SK-N-SH (cell line): ENCODE measurements at regions of chr2 and their contacts with region 1.

Region 1: DNA sequence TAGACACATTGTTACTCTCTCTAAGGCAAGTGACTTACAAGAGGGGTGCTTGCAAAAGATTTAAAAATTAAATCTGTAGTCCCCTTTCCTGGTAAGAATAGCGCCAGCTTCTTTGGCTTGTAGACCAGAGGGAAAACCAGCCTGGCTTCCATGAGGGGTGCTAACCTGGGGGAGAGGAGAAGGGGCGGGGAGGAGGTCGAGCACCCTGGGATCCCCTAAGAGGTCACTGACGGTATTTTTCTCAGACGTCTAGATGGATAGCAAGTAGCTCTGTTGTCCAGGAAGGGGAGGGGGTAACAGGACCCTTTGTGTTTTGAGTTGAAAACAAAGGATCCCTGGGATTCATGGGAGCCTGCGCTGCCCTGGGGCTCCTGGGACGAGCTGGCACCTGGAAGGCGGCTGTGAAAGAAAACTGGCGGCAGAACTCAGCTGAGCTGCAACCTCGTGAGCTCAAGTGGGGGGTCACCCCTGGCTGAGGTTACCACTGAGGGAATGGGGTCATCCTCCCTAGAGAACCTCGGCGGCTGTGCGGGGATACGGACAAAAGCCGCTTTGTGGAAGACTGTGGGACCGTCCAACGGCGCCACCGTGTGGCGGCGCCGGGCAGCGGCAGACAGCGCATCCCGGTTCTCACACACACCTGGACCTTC is 37.8 kb upstream of the MRPL19 start:
- DNase-seq: peak; percentile 80
- H3K4me3 ChIP-seq: peak overlapping the region; percentile 16 to 37; a peak in 3 of 4 replicates
- H3K27ac ChIP-seq: no peak overlapping the region
- H3K4me1 ChIP-seq: peaks cover 8 to 43% of the 10 kb centered on the region in 2 experiments
- H3K27me3 ChIP-seq: no peaks in the 10 kb centered on the region
- CTCF ChIP-seq: peak; percentile 99
- EP300 ChIP-seq: no peak
- RAD21 ChIP-seq: peak; percentile 88

Region 2: GRCh38 chr2:75480971-75481836 is 127.6 kb before region 1 on chr2:
- CTCF ChIA-PET with region 1: interaction called, 28 read pairs
- POLR2A ChIA-PET with region 1: no interaction called
- DNase-seq: peak; percentile 30
- H3K4me3 ChIP-seq: no peak overlapping the region
- H3K27ac ChIP-seq: no peak overlapping the region
- H3K4me1 ChIP-seq: peaks cover 2 to 7% of the 10 kb centered on the region in 2 experiments; a peak in 3 of 4 replicates
- H3K27me3 ChIP-seq: no peaks in the 10 kb centered on the region
- CTCF ChIP-seq: peak; percentile 37
- EP300 ChIP-seq: no peak
- RAD21 ChIP-seq: peak; percentile 34

Region 3: GRCh38 chr2:75513616-75514170 is 95.1 kb before region 1 on chr2:
- CTCF ChIA-PET with region 1: no interaction called
- POLR2A ChIA-PET with region 1: no interaction called
- DNase-seq: no peak
- H3K4me3 ChIP-seq: no peak overlapping the region
- H3K27ac ChIP-seq: no peak overlapping the region
- H3K4me1 ChIP-seq: no peaks in the 10 kb centered on the region; a peak in 1 of 4 replicates
- H3K27me3 ChIP-seq: no peaks in the 10 kb centered on the region
- CTCF ChIP-seq: no peak
- EP300 ChIP-seq: no peak
- RAD21 ChIP-seq: no peak

Region 4: DNA sequence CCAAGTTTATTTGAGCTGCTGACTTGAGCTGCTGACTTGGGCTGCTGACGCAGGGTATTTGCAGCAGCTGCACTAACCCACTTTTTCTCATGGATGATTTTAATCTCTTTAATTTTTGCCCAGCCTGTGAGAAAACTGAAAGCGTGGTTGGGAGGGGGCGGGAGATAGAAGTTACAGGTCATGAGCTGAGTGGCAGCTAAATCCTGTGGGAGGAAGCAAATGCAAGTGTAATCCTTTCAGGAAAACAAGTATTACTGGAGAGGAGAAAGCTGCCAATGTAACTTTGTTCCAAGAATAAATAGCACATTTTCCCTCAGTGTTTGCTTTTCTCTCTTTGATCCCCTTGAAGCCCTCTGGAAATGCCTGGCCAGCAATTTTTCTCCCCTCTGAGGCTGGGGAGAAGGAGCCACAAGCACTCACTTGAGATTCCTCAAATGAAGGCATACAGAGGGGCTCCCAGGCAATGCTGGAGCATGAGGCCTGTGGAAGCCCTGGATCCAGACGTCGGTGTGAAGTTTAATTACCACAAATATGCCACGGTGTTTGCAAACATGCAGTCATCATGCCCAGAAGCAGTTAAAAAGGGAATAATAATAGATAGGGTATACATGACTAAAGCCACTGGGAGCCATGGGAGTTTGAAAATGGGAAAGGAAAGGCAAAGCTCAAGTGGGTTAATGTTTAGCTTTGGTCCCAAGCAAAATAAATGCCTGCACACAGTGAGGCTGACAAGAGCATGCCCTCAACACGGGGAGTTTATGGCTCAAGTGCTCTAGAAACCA is 37.7 kb before region 1 on chr2:
- CTCF ChIA-PET with region 1: interaction called, 15 read pairs
- POLR2A ChIA-PET with region 1: no interaction called
- DNase-seq: no peak
- H3K4me3 ChIP-seq: no peak overlapping the region
- H3K27ac ChIP-seq: no peak overlapping the region
- H3K4me1 ChIP-seq: peaks cover 4 to 24% of the 10 kb centered on the region in 2 experiments; a peak in 3 of 4 replicates
- H3K27me3 ChIP-seq: no peaks in the 10 kb centered on the region
- CTCF ChIP-seq: no peak
- EP300 ChIP-seq: no peak
- RAD21 ChIP-seq: no peak

Region 5: GRCh38 chr2:75595551-75596395 is 13.0 kb before region 1 on chr2:
- CTCF ChIA-PET with region 1: interaction called, 17 read pairs
- POLR2A ChIA-PET with region 1: no interaction called
- DNase-seq: no peak
- H3K4me3 ChIP-seq: peak overlapping the region in 1 of 2 experiments; percentile 25; a peak in 1 of 4 replicates
- H3K27ac ChIP-seq: peak overlapping the region; percentile 81 to 97; a peak in 3 of 4 replicates
- H3K4me1 ChIP-seq: peaks cover 0 to 43% of the 10 kb centered on the region in 2 experiments
- H3K27me3 ChIP-seq: no peaks in the 10 kb centered on the region
- CTCF ChIP-seq: no peak
- EP300 ChIP-seq: peak in 1 of 2 experiments; percentile 86; a peak in 2 of 4 replicates
- RAD21 ChIP-seq: no peak

Region 6: GRCh38 chr2:75627895-75628504 is 19.2 kb after region 1 on chr2:
- CTCF ChIA-PET with region 1: interaction called, 29 read pairs
- POLR2A ChIA-PET with region 1: no interaction called
- DNase-seq: peak; percentile 64
- H3K4me3 ChIP-seq: peak overlapping the region in 1 of 2 experiments; percentile 53; a peak in 1 of 4 replicates
- H3K27ac ChIP-seq: no peak overlapping the region
- H3K4me1 ChIP-seq: peaks cover 5 to 8% of the 10 kb centered on the region in 2 experiments
- H3K27me3 ChIP-seq: no peaks in the 10 kb centered on the region
- CTCF ChIP-seq: peak; percentile 97
- EP300 ChIP-seq: no peak
- RAD21 ChIP-seq: peak; percentile 87

Region 7: DNA sequence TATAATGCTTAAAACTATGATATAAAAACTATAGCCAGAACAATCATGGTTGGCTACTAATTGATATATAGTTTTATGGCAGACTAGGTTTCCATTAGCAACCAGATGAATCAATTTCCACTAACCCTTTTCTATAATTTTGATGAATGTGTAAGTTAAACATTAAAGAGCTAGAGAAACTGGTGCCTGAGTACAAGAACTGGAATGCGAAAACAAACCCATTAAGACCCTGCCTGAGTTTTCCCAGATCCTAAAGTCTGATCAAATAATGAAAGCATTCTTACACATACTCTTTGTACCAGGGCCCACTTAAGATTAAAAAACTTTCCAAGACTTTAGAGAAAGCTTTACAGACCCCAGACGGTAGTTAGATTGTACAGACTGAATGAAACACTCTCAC is 59.1 kb after region 1 on chr2:
- CTCF ChIA-PET with region 1: no interaction called
- POLR2A ChIA-PET with region 1: no interaction called
- DNase-seq: no peak
- H3K4me3 ChIP-seq: no peak overlapping the region
- H3K27ac ChIP-seq: no peak overlapping the region
- H3K4me1 ChIP-seq: no peaks in the 10 kb centered on the region; a peak in 1 of 4 replicates
- H3K27me3 ChIP-seq: no peaks in the 10 kb centered on the region
- CTCF ChIP-seq: no peak
- EP300 ChIP-seq: no peak
- RAD21 ChIP-seq: no peak

Region 8: DNA sequence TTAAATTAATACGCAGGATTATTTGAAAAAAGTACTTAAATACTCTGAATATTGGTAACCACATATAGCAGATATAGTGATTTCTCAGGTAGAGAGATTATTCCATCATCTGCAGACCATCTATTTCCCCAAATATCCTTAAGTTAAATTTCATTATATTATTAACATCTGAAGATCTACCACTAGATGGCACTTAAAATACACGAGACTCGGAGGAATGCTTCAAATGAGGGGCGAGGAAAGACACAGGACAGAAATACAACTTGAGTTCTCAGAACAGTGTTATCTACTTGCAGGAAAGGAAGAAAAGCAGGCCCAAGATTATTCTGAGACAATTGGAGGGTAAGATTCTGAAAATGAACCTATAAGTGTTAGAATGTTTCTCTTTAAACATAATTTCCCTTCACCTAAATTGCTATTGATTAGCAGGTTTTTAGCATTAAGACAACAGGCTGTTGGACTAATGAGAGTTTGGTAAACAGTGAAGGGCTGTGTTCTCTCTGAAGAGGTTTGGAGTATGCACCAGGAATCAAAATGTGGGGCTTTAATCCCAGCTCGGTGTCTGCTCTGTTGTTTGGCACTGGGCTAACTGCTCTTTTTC is 178.8 kb after region 1 on chr2:
- CTCF ChIA-PET with region 1: no interaction called
- POLR2A ChIA-PET with region 1: no interaction called
- DNase-seq: peak; percentile 42
- H3K4me3 ChIP-seq: no peak overlapping the region
- H3K27ac ChIP-seq: peak overlapping the region in 1 of 2 experiments; percentile 87; a peak in 2 of 4 replicates
- H3K4me1 ChIP-seq: peaks cover 0 to 18% of the 10 kb centered on the region in 2 experiments; a peak in 2 of 4 replicates
- H3K27me3 ChIP-seq: no peaks in the 10 kb centered on the region
- CTCF ChIP-seq: peak; percentile 67
- EP300 ChIP-seq: peak in 1 of 2 experiments; percentile 24; a peak in 1 of 4 replicates
- RAD21 ChIP-seq: peak; percentile 90